Panc1 (cell line): ENCODE measurements at regions of chr1 and their contacts with region 1.

Region 1: GRCh38 chr1:225488676-225489075 is 60.8 kb upstream of the LBR start:
- DNase-seq: no peak
- ATAC-seq: no peak
- H3K4me3 ChIP-seq: no peak overlapping the region
- H3K27ac ChIP-seq: no peak overlapping the region
- H3K4me1 ChIP-seq: no peaks in the 10 kb centered on the region
- H3K27me3 ChIP-seq: no peaks in the 10 kb centered on the region
- CTCF ChIP-seq: no peak

Region 2: GRCh38 chr1:225361176-225361575 is 127.5 kb before region 1 on chr1:
- CTCF ChIA-PET with region 1: no interaction called
- POLR2A ChIA-PET with region 1: no interaction called
- in situ Hi-C with region 1: no loop called
- intact Hi-C with region 1: no loop called
- DNase-seq: no peak
- ATAC-seq: no peak
- H3K4me3 ChIP-seq: no peak overlapping the region
- H3K27ac ChIP-seq: no peak overlapping the region
- H3K4me1 ChIP-seq: no peaks in the 10 kb centered on the region
- H3K27me3 ChIP-seq: peaks cover 5% of the 10 kb centered on the region; the same call in 1 of the 2 replicates
- CTCF ChIP-seq: no peak

Region 3: GRCh38 chr1:225746361-225747179 is 257.9 kb after region 1 on chr1:
- CTCF ChIA-PET with region 1: no interaction called
- POLR2A ChIA-PET with region 1: interaction called, 10 read pairs
- in situ Hi-C with region 1: no loop called
- intact Hi-C with region 1: no loop called
- DNase-seq: peak; percentile 38
- ATAC-seq: peak; percentile 94
- H3K4me3 ChIP-seq: peak overlapping the region; percentile 13 to 43
- H3K27ac ChIP-seq: peak overlapping the region; percentile 57
- H3K4me1 ChIP-seq: no peaks in the 10 kb centered on the region
- H3K27me3 ChIP-seq: no peaks in the 10 kb centered on the region
- CTCF ChIP-seq: no peak